ENCODE measurements at regions of chr6 and their contacts with region 1.

Region 1: DNA sequence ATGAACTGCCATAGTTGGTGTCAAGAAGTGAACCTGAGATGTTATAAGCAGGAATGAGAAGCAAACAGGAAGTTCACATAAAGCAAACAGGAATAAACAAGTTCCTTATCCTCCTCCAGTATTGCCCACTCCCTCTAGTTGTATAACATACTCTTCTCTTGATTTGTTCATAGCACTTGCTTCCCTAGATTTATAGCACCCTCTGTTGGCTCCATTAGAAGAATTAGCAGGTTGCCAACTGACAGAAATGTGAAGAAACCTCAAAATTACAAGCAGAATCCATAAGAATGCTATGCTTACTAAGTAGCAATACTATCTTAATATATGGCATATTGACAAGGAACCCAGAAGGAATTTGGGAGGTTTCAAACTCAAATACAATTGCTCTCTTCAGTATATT is 195.4 kb downstream of the TBX18 start:
- DNase-seq: peak; percentile 7
- ATAC-seq: no peak
- H3K4me3 ChIP-seq: no peak overlapping the region
- H3K27ac ChIP-seq: no peak overlapping the region
- H3K4me1 ChIP-seq: no peaks in the 10 kb centered on the region
- H3K27me3 ChIP-seq: no peaks in the 10 kb centered on the region
- CTCF ChIP-seq: peak; percentile 20; the same call in 1 of the 2 replicates
- POLR2A ChIP-seq: no peak
- RAD21 ChIP-seq: no peak

Region 2: DNA sequence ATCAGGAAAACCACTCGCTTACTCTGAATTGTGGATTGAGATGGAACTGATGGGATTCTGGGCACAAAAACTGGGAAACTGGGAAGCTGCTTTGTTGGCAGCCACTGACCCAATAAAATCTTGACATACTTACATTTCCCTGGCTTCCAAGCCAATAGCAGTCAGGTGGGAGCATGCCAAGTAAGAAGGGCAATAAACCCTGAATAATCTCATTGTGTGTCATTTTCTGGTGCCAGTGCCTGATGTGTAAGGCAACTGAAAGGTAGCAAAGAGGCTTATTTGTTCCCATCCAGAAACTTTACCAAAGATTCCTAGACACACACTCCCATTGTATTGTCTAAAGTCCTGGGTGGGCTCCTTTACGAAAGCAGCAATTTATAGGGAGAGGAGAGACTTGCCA is 102.2 kb after region 1 on chr6:
- CTCF ChIA-PET with region 1: no interaction called
- POLR2A ChIA-PET with region 1: no interaction called
- dilution Hi-C with region 1: no loop called
- in situ Hi-C with region 1: no loop called
- intact Hi-C with region 1: loop called (anchors 10 kb)
- DNase-seq: no peak
- ATAC-seq: no peak
- H3K4me3 ChIP-seq: no peak overlapping the region
- H3K27ac ChIP-seq: no peak overlapping the region
- H3K4me1 ChIP-seq: no peaks in the 10 kb centered on the region
- H3K27me3 ChIP-seq: no peaks in the 10 kb centered on the region
- CTCF ChIP-seq: no peak
- POLR2A ChIP-seq: no peak
- RAD21 ChIP-seq: no peak

Region 3: DNA sequence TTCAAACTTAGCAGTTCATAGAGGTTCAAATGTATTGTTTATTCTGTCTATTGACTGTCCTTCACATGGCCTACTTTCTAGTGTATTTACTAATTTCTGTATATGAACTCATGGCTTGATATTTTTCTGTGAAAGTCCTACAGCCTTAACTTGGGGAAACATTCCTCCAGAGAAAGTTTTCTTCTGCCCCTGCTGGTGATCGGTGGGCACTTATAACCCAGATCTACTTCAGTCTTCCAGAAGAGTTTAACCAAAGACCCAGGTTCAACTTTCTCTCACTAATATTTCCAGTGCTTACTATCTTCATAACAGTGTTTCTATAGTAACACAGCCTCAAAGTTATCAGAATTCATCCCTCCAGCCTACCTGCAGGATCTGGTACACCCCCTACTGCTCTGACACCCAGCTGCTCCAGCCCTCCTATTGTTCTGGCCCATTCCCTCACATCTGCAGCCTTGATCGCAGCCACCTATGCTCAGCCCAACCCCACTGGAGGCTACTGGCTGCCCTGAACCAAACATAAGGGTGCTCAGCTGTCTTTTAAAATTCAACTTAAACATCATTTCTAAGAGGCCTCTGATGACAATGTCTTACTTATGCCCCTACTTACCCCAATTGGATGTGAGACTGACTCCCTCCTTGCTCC is 123.1 kb after region 1 on chr6:
- CTCF ChIA-PET with region 1: no interaction called
- POLR2A ChIA-PET with region 1: no interaction called
- dilution Hi-C with region 1: no loop called
- in situ Hi-C with region 1: no loop called
- intact Hi-C with region 1: loop called (anchors 5 kb)
- DNase-seq: no peak
- ATAC-seq: no peak
- H3K4me3 ChIP-seq: no peak overlapping the region
- H3K27ac ChIP-seq: no peak overlapping the region
- H3K4me1 ChIP-seq: no peaks in the 10 kb centered on the region
- H3K27me3 ChIP-seq: peaks cover 5% of the 10 kb centered on the region; the same call in 1 of the 2 replicates
- CTCF ChIP-seq: no peak
- POLR2A ChIP-seq: no peak
- RAD21 ChIP-seq: no peak

Region 4: DNA sequence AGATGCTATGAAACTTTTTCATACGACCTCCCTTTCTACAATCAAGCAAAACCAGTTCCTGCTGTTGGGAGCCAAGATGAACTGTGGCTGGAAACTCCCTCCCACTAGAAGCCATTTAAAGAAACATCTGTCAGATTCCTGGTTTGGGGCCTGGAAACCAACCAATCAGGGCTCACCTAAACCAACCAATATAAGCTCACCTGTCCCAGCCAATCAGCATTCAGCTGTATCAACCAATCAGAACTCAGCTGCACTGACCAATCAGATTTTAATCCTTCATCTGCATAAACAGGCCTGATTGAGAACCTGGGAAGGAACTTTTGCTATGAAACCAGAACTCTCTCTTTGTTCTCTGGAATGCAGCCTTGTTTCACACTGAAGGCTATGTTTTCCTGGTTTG is 982.3 kb after region 1 on chr6:
- CTCF ChIA-PET with region 1: no interaction called
- POLR2A ChIA-PET with region 1: no interaction called
- dilution Hi-C with region 1: no loop called
- in situ Hi-C with region 1: no loop called
- intact Hi-C with region 1: no loop called
- DNase-seq: no peak
- ATAC-seq: no peak
- H3K4me3 ChIP-seq: no peak overlapping the region
- H3K27ac ChIP-seq: no peak overlapping the region
- H3K4me1 ChIP-seq: no peaks in the 10 kb centered on the region; the same call in 1 of the 2 replicates
- H3K27me3 ChIP-seq: no peaks in the 10 kb centered on the region
- CTCF ChIP-seq: no peak
- POLR2A ChIP-seq: no peak
- RAD21 ChIP-seq: no peak

Measured in IMR-90 (cell line).